HepG2 (cell line): ENCODE measurements at regions of chr10 and their contacts with region 1.

Region 1: DNA sequence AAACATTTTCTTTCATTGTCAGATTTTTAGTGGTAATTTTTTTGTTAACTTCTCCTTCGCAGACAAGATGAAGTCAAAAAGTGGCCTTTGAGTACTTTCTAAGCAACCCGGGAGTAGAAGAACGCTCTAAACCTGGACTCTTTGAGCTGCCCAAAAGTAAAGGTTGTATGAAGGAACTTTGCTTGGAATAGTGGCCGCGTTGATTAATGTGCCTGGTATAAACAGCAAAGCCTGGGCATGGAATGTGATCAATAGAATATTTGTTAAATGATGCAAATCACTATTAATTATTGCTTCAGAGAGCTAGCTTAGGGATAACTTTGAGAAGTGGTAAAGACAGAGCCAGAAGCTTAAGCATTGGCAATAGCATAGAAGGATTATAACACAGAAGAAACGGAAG is 475.1 kb upstream of the ANKRD30A start:
- DNase-seq: no peak
- ATAC-seq: no peak
- H3K4me3 ChIP-seq: no peak overlapping the region
- H3K27ac ChIP-seq: no peak overlapping the region
- H3K4me1 ChIP-seq: no peaks in the 10 kb centered on the region
- H3K27me3 ChIP-seq: no peaks in the 10 kb centered on the region
- CTCF ChIP-seq: no peak
- EP300 ChIP-seq: no peak
- POLR2A ChIP-seq: no peak
- RAD21 ChIP-seq: no peak

Region 2: DNA sequence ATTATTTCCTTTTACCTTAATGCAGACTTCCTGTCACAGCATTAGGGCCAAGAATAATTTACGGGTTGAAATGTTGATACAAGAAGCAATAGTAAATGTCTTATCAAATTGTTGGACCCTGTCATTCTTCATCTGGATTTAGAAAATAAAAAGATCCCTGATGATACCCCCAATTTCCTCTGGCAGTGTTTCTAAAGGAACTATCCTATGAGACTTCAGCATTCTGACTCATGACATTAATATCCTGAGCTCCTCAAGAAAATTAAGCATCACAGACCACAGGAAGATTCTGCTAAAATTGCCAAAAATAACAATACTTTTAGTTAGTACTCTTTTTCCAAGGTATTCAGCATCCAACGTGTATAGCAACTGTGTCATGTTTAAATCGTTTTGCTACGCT is 15.4 kb before region 1 on chr10:
- CTCF ChIA-PET with region 1: no interaction called
- POLR2A ChIA-PET with region 1: no interaction called
- in situ Hi-C with region 1: no loop called
- intact Hi-C with region 1: no loop called
- DNase-seq: no peak
- ATAC-seq: no peak
- H3K4me3 ChIP-seq: no peak overlapping the region
- H3K27ac ChIP-seq: no peak overlapping the region
- H3K4me1 ChIP-seq: no peaks in the 10 kb centered on the region
- H3K27me3 ChIP-seq: no peaks in the 10 kb centered on the region; a peak in 1 of 5 replicates
- CTCF ChIP-seq: no peak
- EP300 ChIP-seq: no peak
- POLR2A ChIP-seq: no peak
- RAD21 ChIP-seq: no peak

Region 3: GRCh38 chr10:36703179-36703578 is 52.9 kb after region 1 on chr10:
- CTCF ChIA-PET with region 1: no interaction called
- POLR2A ChIA-PET with region 1: no interaction called
- in situ Hi-C with region 1: no loop called
- intact Hi-C with region 1: loop called (anchors 1 kb)
- DNase-seq: no peak
- ATAC-seq: no peak
- H3K4me3 ChIP-seq: no peak overlapping the region
- H3K27ac ChIP-seq: no peak overlapping the region
- H3K4me1 ChIP-seq: no peaks in the 10 kb centered on the region
- H3K27me3 ChIP-seq: no peaks in the 10 kb centered on the region
- CTCF ChIP-seq: no peak
- EP300 ChIP-seq: no peak
- POLR2A ChIP-seq: no peak
- RAD21 ChIP-seq: no peak